ENCODE measurements at regions of chr4 and their contacts with region 1.

Region 1: GRCh38 chr4:6673660-6674499 is 19.8 kb upstream of the S100P start:
- DNase-seq: peak; percentile 89 to 99 (median 93)
- ATAC-seq: peak; percentile 79
- H3K4me3 ChIP-seq: peak overlapping the region; percentile 62 to 92
- H3K4me3 Mint-ChIP-seq: peak overlapping the region; percentile 99
- H3K27ac ChIP-seq: peak overlapping the region; percentile 71 to 78
- H3K27ac Mint-ChIP-seq: peak overlapping the region; percentile 99
- H3K4me1 ChIP-seq: peaks cover 38% of the 10 kb centered on the region
- H3K4me1 Mint-ChIP-seq: peaks cover 48% of the 10 kb centered on the region
- H3K27me3 ChIP-seq: no peaks in the 10 kb centered on the region
- H3K27me3 Mint-ChIP-seq: no peaks in the 10 kb centered on the region
- CTCF ChIP-seq: no peak

Region 2: GRCh38 chr4:6574747-6575502 is 99.0 kb before region 1 on chr4 and contains the start of gene MAN2B2:
- CTCF ChIA-PET with region 1: no interaction called
- POLR2A ChIA-PET with region 1: interaction called, 12 read pairs
- intact Hi-C with region 1: no loop called
- DNase-seq: peak; percentile 62 to 89 (median 82)
- ATAC-seq: peak; percentile 94
- H3K4me3 ChIP-seq: peak within 1 kb of the TSS; percentile 99
- H3K4me3 Mint-ChIP-seq: peak within 1 kb of the TSS; percentile 91
- H3K27ac ChIP-seq: peak within 1 kb of the TSS; percentile 80 to 85
- H3K27ac Mint-ChIP-seq: peak within 1 kb of the TSS; percentile 84
- H3K4me1 ChIP-seq: peaks cover 22% of the 10 kb centered on the region
- H3K4me1 Mint-ChIP-seq: peaks cover 21% of the 10 kb centered on the region
- H3K27me3 ChIP-seq: no peaks in the 10 kb centered on the region
- H3K27me3 Mint-ChIP-seq: no peaks in the 10 kb centered on the region
- CTCF ChIP-seq: no peak
- total RNA-seq, gene MAN2B2: 26.4 to 26.7 TPM

Region 3: DNA sequence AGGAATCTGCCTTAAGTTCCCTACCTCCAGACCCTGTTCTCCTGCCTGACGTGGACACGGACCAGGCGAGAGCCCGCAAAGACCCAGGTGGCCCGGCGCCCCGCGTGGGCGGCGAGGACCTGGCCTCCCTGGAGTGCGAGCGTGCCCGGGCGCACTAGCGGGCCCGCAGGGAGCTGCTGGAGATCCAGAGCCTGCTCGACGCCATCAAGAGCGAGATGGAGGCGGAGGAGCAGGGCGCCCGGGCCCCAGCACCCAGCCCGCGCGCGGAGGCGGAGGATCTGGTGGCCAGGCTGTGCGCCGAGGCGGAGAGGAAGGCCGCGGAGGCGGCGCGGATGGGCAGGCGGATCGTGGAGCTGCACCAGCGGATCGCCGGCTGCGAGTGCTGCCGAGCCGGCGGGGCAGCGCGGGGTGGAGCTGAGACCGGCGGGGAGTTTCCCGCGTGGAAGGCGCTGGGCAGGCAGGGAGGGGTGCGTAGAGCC is 15.2 kb before region 1 on chr4:
- CTCF ChIA-PET with region 1: interaction called, 6 read pairs
- POLR2A ChIA-PET with region 1: interaction called, 24 read pairs
- intact Hi-C with region 1: no loop called
- DNase-seq: peak; percentile 19 to 81 (median 49)
- ATAC-seq: peak; percentile 91
- H3K4me3 ChIP-seq: peak overlapping the region; percentile 35 to 43
- H3K4me3 Mint-ChIP-seq: peak overlapping the region; percentile 74
- H3K27ac ChIP-seq: no peak overlapping the region
- H3K27ac Mint-ChIP-seq: no peak overlapping the region
- H3K4me1 ChIP-seq: peaks cover 8% of the 10 kb centered on the region
- H3K4me1 Mint-ChIP-seq: peaks cover 11% of the 10 kb centered on the region
- H3K27me3 ChIP-seq: no peaks in the 10 kb centered on the region
- H3K27me3 Mint-ChIP-seq: peaks cover 9% of the 10 kb centered on the region
- CTCF ChIP-seq: no peak

Region 4: GRCh38 chr4:6688879-6689505 is 15.1 kb after region 1 on chr4:
- CTCF ChIA-PET with region 1: interaction called, 68 read pairs
- POLR2A ChIA-PET with region 1: interaction called, 96 read pairs
- intact Hi-C with region 1: loop called (anchors 1 kb)
- DNase-seq: peak; percentile 53 to 89 (median 81)
- ATAC-seq: peak; percentile 79
- H3K4me3 ChIP-seq: peak overlapping the region; percentile 50 to 58
- H3K4me3 Mint-ChIP-seq: peak overlapping the region; percentile 82
- H3K27ac ChIP-seq: peak overlapping the region; percentile 58 to 75
- H3K27ac Mint-ChIP-seq: peak overlapping the region; percentile 94
- H3K4me1 ChIP-seq: peaks cover 61% of the 10 kb centered on the region
- H3K4me1 Mint-ChIP-seq: peaks cover 75% of the 10 kb centered on the region
- H3K27me3 ChIP-seq: no peaks in the 10 kb centered on the region
- H3K27me3 Mint-ChIP-seq: no peaks in the 10 kb centered on the region
- CTCF ChIP-seq: no peak

Region 5: GRCh38 chr4:6701371-6701770 is 27.5 kb after region 1 on chr4:
- CTCF ChIA-PET with region 1: interaction called, 68 read pairs
- POLR2A ChIA-PET with region 1: interaction called, 155 read pairs
- intact Hi-C with region 1: loop called in 1 of 2 experiments (anchors 1 kb)
- DNase-seq: peak in 5 of 9 experiments; percentile 41 to 66 (median 52)
- ATAC-seq: peak; percentile 34
- H3K4me3 ChIP-seq: no peak overlapping the region
- H3K4me3 Mint-ChIP-seq: no peak overlapping the region
- H3K27ac ChIP-seq: no peak overlapping the region
- H3K27ac Mint-ChIP-seq: no peak overlapping the region
- H3K4me1 ChIP-seq: peaks cover 54% of the 10 kb centered on the region
- H3K4me1 Mint-ChIP-seq: peaks cover 75% of the 10 kb centered on the region
- H3K27me3 ChIP-seq: no peaks in the 10 kb centered on the region
- H3K27me3 Mint-ChIP-seq: no peaks in the 10 kb centered on the region
- CTCF ChIP-seq: no peak

Region 6: DNA sequence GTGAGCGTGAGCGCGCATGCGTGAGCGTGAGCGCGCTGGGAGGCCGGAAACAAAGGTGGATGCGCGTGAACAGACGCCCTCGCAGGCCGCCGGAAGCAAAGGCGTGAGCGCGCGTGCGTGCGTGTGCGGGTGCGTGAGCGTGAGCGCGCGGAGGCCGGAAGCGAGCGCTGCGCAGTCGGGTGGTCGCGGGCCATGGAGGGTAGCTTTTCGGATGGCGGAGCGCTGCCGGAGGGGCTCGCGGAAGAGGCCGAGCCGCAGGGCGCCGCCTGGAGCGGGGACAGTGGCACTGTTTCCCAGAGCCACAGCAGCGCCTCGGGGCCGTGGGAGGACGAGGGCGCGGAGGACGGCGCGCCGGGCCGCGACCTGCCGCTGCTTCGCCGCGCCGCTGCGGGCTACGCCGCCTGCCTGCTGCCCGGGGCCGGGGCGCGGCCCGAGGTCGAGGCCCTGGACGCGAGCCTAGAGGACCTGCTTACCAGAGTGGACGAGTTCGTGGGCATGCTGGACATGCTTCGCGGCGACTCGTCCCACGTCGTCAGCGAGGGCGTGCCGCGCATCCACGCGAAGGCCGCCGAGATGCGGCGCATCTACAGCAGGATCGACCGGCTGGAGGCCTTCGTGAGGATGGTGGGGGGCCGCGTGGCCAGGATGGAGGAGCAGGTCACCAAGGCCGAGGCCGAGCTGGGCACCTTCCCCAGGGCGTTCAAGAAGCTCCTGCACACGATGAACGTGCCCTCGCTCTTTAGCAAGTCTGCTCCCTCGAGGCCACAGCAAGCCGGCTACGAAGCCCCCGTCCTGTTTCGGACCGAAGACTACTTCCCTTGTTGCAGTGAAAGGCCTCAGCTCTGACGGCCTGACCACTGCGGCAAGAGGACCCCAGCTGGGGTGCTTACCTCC is 42.4 kb after region 1 on chr4 and contains the start of gene BLOC1S4:
- CTCF ChIA-PET with region 1: interaction called, 114 read pairs
- POLR2A ChIA-PET with region 1: interaction called, 115 read pairs
- intact Hi-C with region 1: loop called (anchors 1 kb)
- DNase-seq: peak; percentile 77 to 98 (median 88)
- ATAC-seq: peak; percentile 83
- H3K4me3 ChIP-seq: peak within 1 kb of the TSS; percentile 74 to 81
- H3K4me3 Mint-ChIP-seq: peak within 1 kb of the TSS; percentile 95
- H3K27ac ChIP-seq: peak within 1 kb of the TSS; percentile 75 to 80
- H3K27ac Mint-ChIP-seq: peak within 1 kb of the TSS; percentile 97
- H3K4me1 ChIP-seq: peaks cover 25% of the 10 kb centered on the region
- H3K4me1 Mint-ChIP-seq: peaks cover 48% of the 10 kb centered on the region
- H3K27me3 ChIP-seq: no peaks in the 10 kb centered on the region
- H3K27me3 Mint-ChIP-seq: no peaks in the 10 kb centered on the region
- CTCF ChIP-seq: peak; percentile 18
- total RNA-seq, gene BLOC1S4: 29.7 to 30.7 TPM

Region 7: DNA sequence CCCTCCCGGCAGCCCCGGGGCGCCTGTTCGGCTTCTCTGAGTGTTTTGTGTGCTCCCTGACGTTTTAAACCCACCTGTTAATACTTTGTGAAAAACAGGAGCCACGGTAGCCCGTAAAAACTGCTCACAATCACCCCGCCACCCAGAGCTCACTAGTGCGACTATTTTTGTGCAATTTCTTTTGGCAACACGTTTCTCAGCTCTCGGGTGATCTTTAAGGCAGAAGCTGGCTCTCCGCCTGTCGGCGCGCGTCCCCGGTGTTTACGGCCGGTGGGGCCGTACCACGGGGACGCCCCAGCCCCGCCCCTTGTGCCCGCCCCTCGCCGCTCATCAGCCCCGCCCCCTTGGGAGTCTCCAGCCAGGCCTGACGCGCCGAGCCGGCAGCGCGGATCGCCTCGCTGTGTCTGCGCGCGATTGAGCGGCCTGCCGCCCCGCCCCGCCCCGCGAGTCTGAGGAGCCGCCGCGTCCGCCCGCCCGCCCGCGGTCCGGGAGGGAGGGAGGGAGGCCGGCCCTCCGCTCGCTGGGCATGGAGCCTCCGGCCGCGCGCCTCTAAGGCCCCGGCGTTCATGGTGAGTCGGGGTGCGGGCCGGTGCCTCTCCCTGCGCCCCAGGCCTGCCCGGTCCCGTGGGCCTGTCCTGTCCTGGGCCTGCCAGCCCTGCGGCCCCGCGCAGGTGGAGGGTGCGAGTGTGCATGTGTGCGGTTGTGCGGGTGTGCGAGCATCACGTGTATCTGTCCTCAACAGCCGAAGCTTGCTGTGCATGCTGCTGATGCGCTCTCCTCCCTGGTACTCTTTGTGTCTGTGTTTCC is 313.1 kb after region 1 on chr4:
- CTCF ChIA-PET with region 1: no interaction called
- POLR2A ChIA-PET with region 1: no interaction called
- intact Hi-C with region 1: loop called in 1 of 2 experiments (anchors 1 kb)
- DNase-seq: peak; percentile 87 to 97 (median 93)
- ATAC-seq: peak; percentile 92
- H3K4me3 ChIP-seq: peak overlapping the region; percentile 91 to 94
- H3K4me3 Mint-ChIP-seq: peak overlapping the region; percentile 94
- H3K27ac ChIP-seq: peak overlapping the region; percentile 78 to 88
- H3K27ac Mint-ChIP-seq: peak overlapping the region; percentile 98
- H3K4me1 ChIP-seq: peaks cover 55% of the 10 kb centered on the region
- H3K4me1 Mint-ChIP-seq: peaks cover 81% of the 10 kb centered on the region
- H3K27me3 ChIP-seq: no peaks in the 10 kb centered on the region
- H3K27me3 Mint-ChIP-seq: no peaks in the 10 kb centered on the region
- CTCF ChIP-seq: no peak